IMR-90 (cell line): ENCODE measurements at regions of chr4 and their contacts with region 1.

Region 1: DNA sequence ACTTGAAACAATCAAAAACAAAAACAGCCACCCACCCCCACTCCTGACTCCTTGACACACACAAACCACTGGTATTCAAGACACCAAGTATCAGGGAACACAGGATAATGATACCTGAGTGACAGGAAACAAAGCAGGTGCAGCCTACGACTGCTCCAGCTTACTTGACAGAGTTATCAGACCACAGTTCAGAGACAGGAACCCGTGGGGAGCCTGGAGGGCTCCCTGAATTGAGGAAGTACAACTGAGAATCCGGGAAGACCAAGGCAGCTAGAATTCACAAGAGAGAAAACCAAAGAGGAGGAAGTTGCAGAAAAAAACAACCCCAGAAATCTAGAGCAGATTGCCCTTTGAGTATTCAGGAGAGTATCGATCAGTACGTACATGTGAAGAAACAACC is 20.5 kb downstream of the COMMD8 start:
- DNase-seq: no peak
- ATAC-seq: no peak
- H3K4me3 ChIP-seq: no peak overlapping the region
- H3K27ac ChIP-seq: no peak overlapping the region
- H3K4me1 ChIP-seq: no peaks in the 10 kb centered on the region
- H3K27me3 ChIP-seq: no peaks in the 10 kb centered on the region
- CTCF ChIP-seq: no peak
- POLR2A ChIP-seq: no peak
- RAD21 ChIP-seq: no peak

Region 2: GRCh38 chr4:47309165-47309564 is 133.8 kb before region 1 on chr4:
- CTCF ChIA-PET with region 1: no interaction called
- POLR2A ChIA-PET with region 1: no interaction called
- dilution Hi-C with region 1: no loop called
- in situ Hi-C with region 1: no loop called
- intact Hi-C with region 1: loop called (anchors 10 kb)
- DNase-seq: no peak
- ATAC-seq: no peak
- H3K4me3 ChIP-seq: no peak overlapping the region
- H3K27ac ChIP-seq: no peak overlapping the region
- H3K4me1 ChIP-seq: no peaks in the 10 kb centered on the region
- H3K27me3 ChIP-seq: no peaks in the 10 kb centered on the region
- CTCF ChIP-seq: no peak
- POLR2A ChIP-seq: no peak
- RAD21 ChIP-seq: no peak